HepG2 (cell line): ENCODE measurements at regions of chr2 and their contacts with region 1.

Region 1: GRCh38 chr2:186256540-186256939 is 229.5 kb upstream of the ZC3H15 start:
- DNase-seq: peak; percentile 57
- ATAC-seq: peak; percentile 80
- H3K4me3 ChIP-seq: no peak overlapping the region
- H3K27ac ChIP-seq: no peak overlapping the region
- H3K4me1 ChIP-seq: no peaks in the 10 kb centered on the region
- H3K27me3 ChIP-seq: no peaks in the 10 kb centered on the region
- CTCF ChIP-seq: peak; percentile 82
- EP300 ChIP-seq: no peak
- POLR2A ChIP-seq: no peak
- RAD21 ChIP-seq: peak; percentile 79

Region 2: GRCh38 chr2:185291035-185291647 is 965.4 kb before region 1 on chr2:
- CTCF ChIA-PET with region 1: interaction called, 4 read pairs
- POLR2A ChIA-PET with region 1: no interaction called
- in situ Hi-C with region 1: no loop called
- intact Hi-C with region 1: loop called (anchors 1 kb)
- DNase-seq: peak; percentile 64
- ATAC-seq: peak; percentile 100
- H3K4me3 ChIP-seq: no peak overlapping the region
- H3K27ac ChIP-seq: no peak overlapping the region
- H3K4me1 ChIP-seq: peaks cover 10% of the 10 kb centered on the region
- H3K27me3 ChIP-seq: no peaks in the 10 kb centered on the region
- CTCF ChIP-seq: peak; percentile 74
- EP300 ChIP-seq: no peak
- POLR2A ChIP-seq: no peak
- RAD21 ChIP-seq: peak; percentile 74

Region 3: DNA sequence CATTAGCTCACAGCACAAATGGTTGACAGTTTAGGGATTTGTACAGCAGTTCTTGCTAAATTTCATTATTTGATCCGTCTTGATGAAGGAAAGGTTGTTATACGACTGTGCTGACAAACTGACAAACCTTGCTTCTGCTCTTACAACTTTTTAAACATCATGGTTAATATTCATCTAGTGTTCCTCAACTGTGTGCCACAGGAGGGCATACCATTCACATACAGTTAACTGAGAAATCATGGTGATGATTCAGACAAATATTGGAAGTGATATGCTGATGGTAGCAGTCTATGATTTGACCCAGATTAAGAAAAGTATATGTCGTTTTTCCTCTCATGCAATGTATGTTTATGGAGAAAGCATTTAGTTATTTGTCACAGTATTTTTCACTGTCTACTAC is 647.7 kb before region 1 on chr2:
- CTCF ChIA-PET with region 1: no interaction called
- POLR2A ChIA-PET with region 1: no interaction called
- in situ Hi-C with region 1: loop called (anchors 25 kb)
- intact Hi-C with region 1: loop called (anchors 5 kb)
- DNase-seq: no peak
- ATAC-seq: peak; percentile 71
- H3K4me3 ChIP-seq: no peak overlapping the region
- H3K27ac ChIP-seq: no peak overlapping the region
- H3K4me1 ChIP-seq: no peaks in the 10 kb centered on the region
- H3K27me3 ChIP-seq: no peaks in the 10 kb centered on the region
- CTCF ChIP-seq: peak; percentile 60
- EP300 ChIP-seq: no peak
- POLR2A ChIP-seq: no peak
- RAD21 ChIP-seq: no peak

Region 4: DNA sequence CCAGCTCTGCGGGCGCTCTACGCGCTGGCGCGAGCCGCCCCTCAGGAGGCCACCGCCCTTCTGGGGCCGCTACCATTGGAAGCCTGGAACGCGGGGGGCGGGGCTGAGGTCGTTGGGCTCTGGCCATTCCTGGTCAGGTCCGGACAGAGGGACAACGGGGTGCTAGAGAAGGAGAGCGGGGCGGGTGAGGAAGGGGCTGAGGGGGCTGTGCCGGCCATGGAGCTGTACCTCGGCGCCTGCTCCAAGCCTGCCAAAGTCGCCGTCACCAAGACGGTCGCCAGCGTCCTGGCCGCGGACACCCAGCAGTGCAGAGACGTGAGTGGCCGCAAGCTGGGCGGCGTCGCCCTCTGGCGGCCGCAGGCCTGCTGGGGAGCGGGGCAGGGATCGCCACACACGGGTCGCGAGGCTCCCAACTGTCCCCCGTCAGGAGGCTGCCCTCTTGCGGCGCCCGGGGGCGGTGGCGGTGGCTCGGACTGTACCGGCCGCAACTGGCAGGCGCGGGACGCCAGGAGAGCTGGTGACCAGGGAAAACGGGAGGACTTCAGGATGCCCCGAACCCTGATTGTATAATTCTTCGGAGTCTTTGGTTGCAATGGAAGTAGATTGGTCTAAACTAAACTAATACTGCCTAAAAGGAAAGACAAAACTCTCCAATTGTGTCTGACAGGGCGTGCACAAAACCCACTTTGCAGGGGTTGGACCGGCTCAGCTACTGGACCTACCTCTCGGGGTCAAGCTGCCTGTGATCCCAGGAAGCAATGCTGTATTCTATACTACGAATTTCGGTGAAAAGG is 517.7 kb before region 1 on chr2 and contains the start of gene FSIP2:
- CTCF ChIA-PET with region 1: interaction called, 3 read pairs
- POLR2A ChIA-PET with region 1: no interaction called
- in situ Hi-C with region 1: loop called (anchors 10 kb)
- intact Hi-C with region 1: loop called (anchors 5 kb)
- DNase-seq: peak; percentile 65
- ATAC-seq: peak; percentile 98
- H3K4me3 ChIP-seq: peak within 1 kb of the TSS; percentile 38 to 64 (median 49); a peak in 5 of 6 replicates
- H3K27ac ChIP-seq: no peak within 1 kb of the TSS
- H3K4me1 ChIP-seq: no peaks in the 10 kb centered on the region
- H3K27me3 ChIP-seq: 0 out of 5 replicates have a peak, but pooled peaks cover 0 to 4% of the 10 kb centered on the region in 2 experiments
- CTCF ChIP-seq: peak; percentile 97
- EP300 ChIP-seq: no peak
- POLR2A ChIP-seq: no peak
- RAD21 ChIP-seq: peak; percentile 97
- total RNA-seq, gene FSIP2: 0.04 and 0.07 TPM in 2 replicates

Region 5: GRCh38 chr2:185979546-185980071 is 276.9 kb before region 1 on chr2:
- CTCF ChIA-PET with region 1: interaction called, 4 read pairs
- POLR2A ChIA-PET with region 1: no interaction called
- in situ Hi-C with region 1: no loop called
- intact Hi-C with region 1: loop called (anchors 5 kb)
- DNase-seq: peak; percentile 5
- ATAC-seq: peak; percentile 68
- H3K4me3 ChIP-seq: no peak overlapping the region
- H3K27ac ChIP-seq: no peak overlapping the region
- H3K4me1 ChIP-seq: no peaks in the 10 kb centered on the region
- H3K27me3 ChIP-seq: no peaks in the 10 kb centered on the region
- CTCF ChIP-seq: peak; percentile 32; the same call in 1 of the 2 replicates
- EP300 ChIP-seq: no peak
- POLR2A ChIP-seq: no peak
- RAD21 ChIP-seq: no peak

Region 6: DNA sequence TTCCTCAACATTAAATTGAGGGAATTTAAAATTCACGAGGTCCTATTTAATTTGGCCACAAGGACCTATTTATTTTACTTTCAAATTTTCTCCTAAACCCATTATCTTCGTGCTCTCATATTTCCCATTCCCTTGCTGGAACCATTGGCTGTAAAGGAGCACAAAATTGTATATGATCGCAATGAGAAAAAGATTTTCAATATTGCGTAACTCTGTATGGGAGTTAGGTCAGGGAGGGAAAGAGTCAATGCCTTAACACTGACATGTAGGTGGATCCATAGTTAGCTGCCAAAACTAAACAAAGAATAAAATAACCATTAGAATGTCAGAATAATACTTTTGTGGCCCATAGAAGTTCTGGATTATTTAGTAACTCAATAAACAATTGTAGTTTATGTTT is 189.0 kb after region 1 on chr2:
- CTCF ChIA-PET with region 1: no interaction called
- POLR2A ChIA-PET with region 1: no interaction called
- in situ Hi-C with region 1: no loop called
- intact Hi-C with region 1: no loop called
- DNase-seq: no peak
- ATAC-seq: no peak
- H3K4me3 ChIP-seq: no peak overlapping the region
- H3K27ac ChIP-seq: no peak overlapping the region
- H3K4me1 ChIP-seq: peaks cover 10% of the 10 kb centered on the region
- H3K27me3 ChIP-seq: no peaks in the 10 kb centered on the region
- CTCF ChIP-seq: no peak
- EP300 ChIP-seq: no peak
- POLR2A ChIP-seq: no peak
- RAD21 ChIP-seq: no peak

Region 7: GRCh38 chr2:186887107-186888090 is 630.9 kb after region 1 on chr2:
- CTCF ChIA-PET with region 1: no interaction called
- POLR2A ChIA-PET with region 1: no interaction called
- in situ Hi-C with region 1: no loop called
- intact Hi-C with region 1: no loop called
- DNase-seq: no peak
- ATAC-seq: no peak
- H3K4me3 ChIP-seq: no peak overlapping the region
- H3K27ac ChIP-seq: no peak overlapping the region
- H3K4me1 ChIP-seq: no peaks in the 10 kb centered on the region
- H3K27me3 ChIP-seq: no peaks in the 10 kb centered on the region; a peak in 1 of 5 replicates
- CTCF ChIP-seq: no peak
- EP300 ChIP-seq: no peak
- POLR2A ChIP-seq: no peak
- RAD21 ChIP-seq: no peak